HepG2 (cell line): ENCODE measurements at regions of chr2 and their contacts with region 1.

Region 1: DNA sequence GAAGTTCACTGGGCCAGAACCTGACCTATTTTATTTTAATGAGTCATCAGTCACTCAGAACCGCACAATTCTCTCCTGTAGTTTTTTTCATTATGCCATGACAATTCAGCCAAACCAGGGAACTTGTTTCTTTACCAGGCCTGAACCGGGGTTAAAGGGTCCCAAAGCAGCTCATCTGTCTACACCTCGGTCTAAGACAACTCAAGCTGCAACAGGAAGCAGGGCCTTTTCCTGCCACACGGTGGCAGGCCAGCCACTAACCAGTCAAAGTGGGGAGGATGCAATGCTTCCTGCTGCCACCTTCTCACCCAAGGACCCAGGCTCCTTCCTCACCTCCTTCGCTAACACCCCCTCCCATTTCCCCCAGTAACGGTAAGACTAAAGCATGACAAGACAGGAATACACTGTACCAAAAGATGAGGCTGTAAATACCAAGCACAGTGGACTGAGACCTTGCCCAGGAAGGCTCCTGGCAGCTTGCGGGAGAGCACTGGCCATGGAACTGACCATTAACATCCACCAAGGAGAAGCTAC is 56.7 kb upstream of the ACKR3 start:
- DNase-seq: peak; percentile 23
- ATAC-seq: peak; percentile 99
- H3K4me3 ChIP-seq: no peak overlapping the region
- H3K27ac ChIP-seq: no peak overlapping the region
- H3K4me1 ChIP-seq: no peaks in the 10 kb centered on the region
- H3K27me3 ChIP-seq: peaks cover 0 to 8% of the 10 kb centered on the region in 2 experiments; a peak in 2 of 5 replicates
- CTCF ChIP-seq: peak; percentile 90
- EP300 ChIP-seq: no peak
- POLR2A ChIP-seq: no peak
- RAD21 ChIP-seq: peak; percentile 78

Region 2: DNA sequence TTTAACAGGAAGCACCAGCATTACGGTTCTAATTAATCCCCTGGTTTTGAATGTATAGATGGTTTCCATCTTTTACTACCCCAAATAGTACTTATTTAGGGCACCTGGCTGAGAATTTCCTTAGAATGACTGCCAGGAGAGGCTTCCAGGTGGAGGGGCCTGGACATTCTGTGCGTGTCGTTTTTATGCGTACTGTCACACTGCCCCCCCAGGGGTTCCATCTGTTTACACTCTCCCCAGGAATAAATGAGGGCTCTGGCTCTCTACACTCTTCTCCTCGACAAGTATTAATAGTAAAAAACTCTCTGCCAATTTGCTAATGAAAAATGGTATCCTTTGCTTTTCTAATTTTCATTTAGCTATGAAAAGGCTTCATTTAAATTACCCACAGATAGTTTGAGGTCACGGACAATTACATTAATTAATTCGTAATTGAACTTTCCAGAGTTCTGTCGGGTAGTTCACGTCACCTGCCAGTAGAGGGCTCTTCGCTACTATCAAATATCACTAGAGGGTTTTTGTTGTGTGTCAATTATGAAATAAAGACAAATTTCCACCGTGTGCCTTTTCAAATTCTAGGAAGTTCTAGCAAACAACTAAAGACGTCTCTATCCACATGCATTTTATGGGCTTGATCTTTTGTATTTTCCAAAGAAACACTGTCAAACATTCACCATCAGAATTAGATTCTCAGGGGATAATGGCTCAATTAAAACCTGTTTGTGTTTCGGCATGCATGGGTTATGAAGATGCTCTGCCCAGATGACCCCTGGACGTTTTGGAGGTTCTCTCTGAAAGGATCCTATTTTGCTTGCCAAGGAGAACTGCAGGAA is 160.0 kb before region 1 on chr2:
- CTCF ChIA-PET with region 1: no interaction called
- POLR2A ChIA-PET with region 1: no interaction called
- in situ Hi-C with region 1: no loop called
- intact Hi-C with region 1: loop called (anchors 1 kb)
- DNase-seq: no peak
- ATAC-seq: no peak
- H3K4me3 ChIP-seq: no peak overlapping the region
- H3K27ac ChIP-seq: no peak overlapping the region
- H3K4me1 ChIP-seq: no peaks in the 10 kb centered on the region
- H3K27me3 ChIP-seq: peaks cover 0 to 43% of the 10 kb centered on the region in 2 experiments; a peak in 4 of 5 replicates
- CTCF ChIP-seq: peak; percentile 72
- EP300 ChIP-seq: no peak
- POLR2A ChIP-seq: no peak
- RAD21 ChIP-seq: peak; percentile 55; the same call in 1 of the 2 replicates

Region 3: GRCh38 chr2:236569573-236569973 is 56.6 kb after region 1 on chr2 and contains the start of gene ACKR3:
- CTCF ChIA-PET with region 1: no interaction called
- POLR2A ChIA-PET with region 1: no interaction called
- in situ Hi-C with region 1: no loop called
- intact Hi-C with region 1: loop called (anchors 5 kb)
- DNase-seq: peak; percentile 41
- ATAC-seq: peak; percentile 90
- H3K4me3 ChIP-seq: no peak within 1 kb of the TSS
- H3K27ac ChIP-seq: no peak within 1 kb of the TSS
- H3K4me1 ChIP-seq: peaks cover 20% of the 10 kb centered on the region
- H3K27me3 ChIP-seq: peaks cover 0 to 68% of the 10 kb centered on the region in 2 experiments; a peak in 4 of 5 replicates
- CTCF ChIP-seq: peak; percentile 69
- EP300 ChIP-seq: no peak
- POLR2A ChIP-seq: no peak
- RAD21 ChIP-seq: no peak
- total RNA-seq, gene ACKR3: not detected in 2 replicates

Region 4: DNA sequence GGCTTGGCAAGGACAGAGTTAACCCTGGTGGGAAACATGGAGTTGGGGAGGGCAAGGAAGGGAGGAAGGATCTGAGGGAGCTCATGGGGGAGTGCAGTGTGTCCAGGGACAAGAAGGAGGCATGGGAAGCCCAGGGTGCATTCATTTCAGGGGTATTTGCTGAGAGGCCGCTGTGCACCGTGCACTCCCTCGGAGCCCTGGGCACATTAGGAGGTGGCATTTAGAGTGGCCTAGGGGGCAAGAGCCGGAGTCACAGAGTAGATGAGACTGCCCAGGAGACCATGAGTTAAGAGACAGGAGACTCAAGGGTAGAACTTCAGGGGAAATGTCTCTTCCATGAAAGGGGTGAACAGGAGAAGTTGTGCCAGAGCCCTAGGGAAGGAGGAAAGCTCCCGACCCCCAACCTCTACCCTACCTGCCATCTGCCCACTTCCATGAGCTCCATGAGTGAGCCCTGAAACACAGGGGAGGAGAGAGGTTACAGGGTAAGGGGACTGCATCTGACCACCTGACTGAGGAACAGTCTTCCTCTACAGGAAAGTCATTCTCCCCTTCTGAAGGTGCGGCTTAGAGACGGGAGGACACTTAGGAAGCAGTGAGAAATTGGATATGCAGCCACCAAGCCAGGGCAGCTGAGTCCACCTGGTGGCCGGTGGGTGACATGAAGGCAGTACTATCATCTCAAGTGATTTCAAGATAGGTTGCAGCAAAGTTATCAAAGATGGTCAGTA is 514.2 kb after region 1 on chr2:
- CTCF ChIA-PET with region 1: interaction called, 31 read pairs
- POLR2A ChIA-PET with region 1: no interaction called
- in situ Hi-C with region 1: loop called (anchors 10 kb)
- intact Hi-C with region 1: no loop called
- DNase-seq: peak; percentile 45
- ATAC-seq: peak; percentile 83
- H3K4me3 ChIP-seq: no peak overlapping the region
- H3K27ac ChIP-seq: no peak overlapping the region
- H3K4me1 ChIP-seq: peaks cover 14% of the 10 kb centered on the region
- H3K27me3 ChIP-seq: no peaks in the 10 kb centered on the region
- CTCF ChIP-seq: peak; percentile 97
- EP300 ChIP-seq: no peak
- POLR2A ChIP-seq: no peak
- RAD21 ChIP-seq: peak; percentile 91

Region 5: DNA sequence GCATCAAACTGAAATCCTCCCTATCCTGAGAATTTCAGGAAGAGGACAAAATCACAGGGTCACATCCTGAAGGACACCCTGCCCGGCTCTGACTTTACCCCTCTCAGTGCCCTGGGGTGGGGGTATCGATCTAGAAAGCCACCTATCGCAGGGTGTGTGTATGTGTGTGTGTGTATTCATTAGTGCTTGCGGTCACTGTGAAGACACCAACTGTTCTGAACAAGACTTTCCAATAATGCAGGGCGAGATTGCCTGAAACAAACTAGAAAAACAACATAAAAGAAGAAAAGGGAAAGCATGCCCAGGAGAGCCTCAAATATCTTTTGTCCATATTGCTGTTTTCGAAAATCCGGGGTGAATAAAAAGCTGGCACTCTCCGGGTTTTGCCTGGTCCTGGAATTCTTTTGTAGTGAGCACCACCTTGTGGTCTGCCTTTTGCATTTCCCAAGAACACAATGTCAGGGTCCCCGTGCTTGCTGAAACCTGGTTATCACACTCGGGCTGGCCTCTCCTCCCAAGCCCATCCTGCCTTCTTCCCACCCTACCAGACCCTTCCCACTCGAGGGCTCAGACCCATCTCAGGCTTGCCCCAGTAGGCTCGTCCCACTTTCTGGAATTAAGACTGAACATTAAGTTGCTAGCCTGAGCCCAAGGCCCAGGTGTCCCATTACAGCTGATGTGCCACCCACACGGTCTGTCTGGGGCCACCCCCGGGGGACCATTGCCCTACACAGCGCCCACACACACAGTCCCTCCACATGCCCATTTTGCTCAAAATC is 547.8 kb after region 1 on chr2:
- CTCF ChIA-PET with region 1: interaction called, 23 read pairs
- POLR2A ChIA-PET with region 1: no interaction called
- in situ Hi-C with region 1: no loop called
- intact Hi-C with region 1: loop called (anchors 1 kb)
- DNase-seq: peak; percentile 62
- ATAC-seq: peak; percentile 90
- H3K4me3 ChIP-seq: no peak overlapping the region
- H3K27ac ChIP-seq: no peak overlapping the region
- H3K4me1 ChIP-seq: peaks cover 7% of the 10 kb centered on the region; the same call in 1 of the 2 replicates
- H3K27me3 ChIP-seq: no peaks in the 10 kb centered on the region
- CTCF ChIP-seq: peak; percentile 85
- EP300 ChIP-seq: no peak
- POLR2A ChIP-seq: no peak
- RAD21 ChIP-seq: peak; percentile 77

Region 6: GRCh38 chr2:237072067-237072931 is 559.3 kb after region 1 on chr2:
- CTCF ChIA-PET with region 1: interaction called, 13 read pairs
- POLR2A ChIA-PET with region 1: no interaction called
- in situ Hi-C with region 1: loop called (anchors 5 kb)
- intact Hi-C with region 1: loop called (anchors 1 kb)
- DNase-seq: peak; percentile 51
- ATAC-seq: no peak
- H3K4me3 ChIP-seq: no peak overlapping the region
- H3K27ac ChIP-seq: no peak overlapping the region
- H3K4me1 ChIP-seq: peaks cover 49% of the 10 kb centered on the region
- H3K27me3 ChIP-seq: no peaks in the 10 kb centered on the region
- CTCF ChIP-seq: peak; percentile 91
- EP300 ChIP-seq: no peak
- POLR2A ChIP-seq: no peak
- RAD21 ChIP-seq: peak; percentile 79